Kidney (tissue), 22 donors: ENCODE measurements at regions of chr9 and their contacts with region 1.

Region 1: GRCh38 chr9:127742435-127743088 is 7.5 kb upstream of the TOR2A start:
- DNase-seq: peak in 4 of 5 donors; percentile 94 to 96 (median 95)
- H3K4me3 ChIP-seq: peak overlapping the region in 1 of 3 donors; percentile 33
- H3K27ac ChIP-seq: no peak overlapping the region
- H3K4me1 ChIP-seq: peaks cover 0 to 3% (median 0%) of the 10 kb centered on the region in 3 donors
- H3K27me3 ChIP-seq: no peaks in the 10 kb centered on the region
- CTCF ChIP-seq: no peak

Region 2: GRCh38 chr9:127779136-127779981 is 36.8 kb after region 1 on chr9:
- intact Hi-C with region 1: loop called (anchors 5 kb)
- DNase-seq: no peak
- H3K4me3 ChIP-seq: no peak overlapping the region
- H3K27ac ChIP-seq: peak overlapping the region in 1 of 2 donors; percentile 55
- H3K4me1 ChIP-seq: peaks cover 0 to 3% (median 0%) of the 10 kb centered on the region in 3 donors
- H3K27me3 ChIP-seq: no peaks in the 10 kb centered on the region
- CTCF ChIP-seq: no peak